CD8-positive, alpha-beta memory T cell (primary cell): ENCODE measurements at regions of chr1 and their contacts with region 1.

Region 1: DNA sequence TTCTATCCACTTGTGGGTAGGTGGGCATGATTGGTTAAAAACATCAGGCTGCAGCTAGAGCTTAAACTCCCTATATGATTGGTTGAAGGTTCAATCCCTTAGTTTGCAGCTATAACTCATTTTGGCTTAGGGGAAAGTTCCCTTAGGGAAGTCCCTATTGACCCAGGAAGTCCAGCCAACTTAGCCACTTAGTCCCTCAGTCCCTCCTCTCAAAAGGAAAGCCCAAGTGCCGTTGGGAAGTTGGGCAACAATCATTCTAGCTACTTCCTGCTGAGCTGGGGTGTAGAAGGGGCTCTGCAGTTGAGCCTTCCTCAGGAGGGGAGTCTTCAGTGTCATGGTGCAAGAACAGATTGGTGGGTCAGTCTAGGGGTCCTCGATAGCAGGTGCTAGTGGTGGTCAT is 12.2 kb downstream of the MSTO1 start:
- DNase-seq: no peak
- H3K4me3 ChIP-seq: no peak overlapping the region
- H3K4me3 Mint-ChIP-seq: no peak overlapping the region
- H3K27ac ChIP-seq: no peak overlapping the region
- H3K27ac Mint-ChIP-seq: peak overlapping the region in 1 of 8 donors; percentile 14
- H3K4me1 ChIP-seq: no peaks in the 10 kb centered on the region
- H3K4me1 Mint-ChIP-seq: no peaks in the 10 kb centered on the region
- H3K27me3 ChIP-seq: no peaks in the 10 kb centered on the region
- H3K27me3 Mint-ChIP-seq: no peaks in the 10 kb centered on the region

Region 2: GRCh38 chr1:156056326-156056849 is 434.2 kb after region 1 on chr1:
- CTCF ChIA-PET with region 1: no interaction called
- POLR2A ChIA-PET with region 1: interaction called, 10 read pairs
- DNase-seq: peak in 1 of 5 donors; percentile 8
- H3K4me3 ChIP-seq: no peak overlapping the region
- H3K4me3 Mint-ChIP-seq: peak overlapping the region in 6 of 7 donors; percentile 12 to 93 (median 49)
- H3K27ac ChIP-seq: no peak overlapping the region
- H3K27ac Mint-ChIP-seq: peak overlapping the region in 1 of 8 donors; percentile 30
- H3K4me1 ChIP-seq: peaks cover 16% of the 10 kb centered on the region
- H3K4me1 Mint-ChIP-seq: peaks cover 29 to 43% (median 34%) of the 10 kb centered on the region in 3 donors
- H3K27me3 ChIP-seq: no peaks in the 10 kb centered on the region
- H3K27me3 Mint-ChIP-seq: no peaks in the 10 kb centered on the region